ENCODE measurements at regions of chr4 and their contacts with region 1.

Region 1: GRCh38 chr4:6909073-6909965 is at the start of gene TBC1D14:
- DNase-seq: peak; percentile 73 to 80
- ATAC-seq: peak; percentile 85 to 91
- H3K4me3 ChIP-seq: peak within 1 kb of the TSS; percentile 95
- H3K27ac ChIP-seq: peak within 1 kb of the TSS; percentile 98 to 99
- H3K4me1 ChIP-seq: peaks cover 27% of the 10 kb centered on the region
- CTCF ChIP-seq: no peak; the same call in 2 of the 3 replicates
- EP300 ChIP-seq: no peak
- POLR2A ChIP-seq: peak; percentile 73
- RAD21 ChIP-seq: no peak
- polyA plus RNA-seq, gene TBC1D14: 35.8 and 39.0 TPM in 2 replicates

Region 2: GRCh38 chr4:6898763-6899162 is 10.6 kb before region 1 on chr4:
- CTCF ChIA-PET with region 1: interaction called, 10 read pairs
- POLR2A ChIA-PET with region 1: interaction called, 9 read pairs
- DNase-seq: no peak
- ATAC-seq: no peak
- H3K4me3 ChIP-seq: no peak overlapping the region
- H3K27ac ChIP-seq: 0 out of 6 replicates have a peak overlapping the region, but pooled peaks of 1 of the 2 experiments have one; percentile 22
- H3K4me1 ChIP-seq: peaks cover 10% of the 10 kb centered on the region
- CTCF ChIP-seq: no peak
- EP300 ChIP-seq: no peak
- POLR2A ChIP-seq: no peak
- RAD21 ChIP-seq: no peak